CD8-positive, alpha-beta T cell (primary cell): ENCODE measurements at regions of chr3 and their contacts with region 1.

Region 1: GRCh38 chr3:49339945-49340800 is at the start of gene USP4:
- DNase-seq: peak; percentile 79 to 97 (median 90)
- ATAC-seq: peak; percentile 85
- H3K4me3 ChIP-seq: peak within 1 kb of the TSS; percentile 78 to 89
- H3K4me3 Mint-ChIP-seq: peak within 1 kb of the TSS; percentile 93
- H3K27ac ChIP-seq: peak within 1 kb of the TSS; percentile 98
- H3K27ac Mint-ChIP-seq: peak within 1 kb of the TSS; percentile 96
- H3K4me1 ChIP-seq: peaks cover 40% of the 10 kb centered on the region
- H3K4me1 Mint-ChIP-seq: peaks cover 48% of the 10 kb centered on the region
- H3K27me3 ChIP-seq: no peaks in the 10 kb centered on the region
- H3K27me3 Mint-ChIP-seq: no peaks in the 10 kb centered on the region
- CTCF ChIP-seq: peak; percentile 36
- total RNA-seq, gene USP4: 78.0 to 92.4 TPM

Region 2: DNA sequence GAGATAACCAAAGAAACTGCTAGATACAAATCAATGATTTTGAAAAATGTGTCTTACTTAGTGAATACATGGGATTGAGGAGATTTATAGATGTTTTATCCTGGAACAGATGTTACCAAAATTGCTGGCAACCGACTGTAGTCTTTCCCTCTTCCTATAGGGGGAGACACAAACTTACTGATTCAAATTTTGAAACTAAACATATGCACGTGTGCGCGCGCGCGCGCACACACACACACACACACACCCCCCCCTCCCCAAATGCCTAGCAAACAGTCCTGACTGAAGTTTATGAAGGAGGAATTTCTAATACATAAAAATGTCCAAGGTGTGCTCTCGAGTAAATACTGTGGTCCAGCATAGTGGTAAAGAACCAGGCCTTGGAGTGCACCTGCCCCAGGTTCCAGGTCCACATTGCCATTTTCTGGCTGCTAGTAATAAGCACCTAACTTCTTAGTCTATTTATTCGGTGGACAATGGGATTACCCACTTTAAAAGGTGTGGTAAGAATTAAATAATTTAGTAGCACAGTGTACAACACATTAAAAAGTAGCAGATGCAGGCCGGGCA is 44.6 kb before region 1 on chr3:
- CTCF ChIA-PET with region 1: interaction called, 4 read pairs
- POLR2A ChIA-PET with region 1: interaction called, 3 read pairs
- intact Hi-C with region 1: loop called in 1 of 2 experiments (anchors 10 kb)
- DNase-seq: peak in 5 of 9 experiments; percentile 22 to 65 (median 46)
- ATAC-seq: peak; percentile 77
- H3K4me3 ChIP-seq: no peak overlapping the region
- H3K4me3 Mint-ChIP-seq: no peak overlapping the region
- H3K27ac ChIP-seq: no peak overlapping the region
- H3K27ac Mint-ChIP-seq: peak overlapping the region; percentile 37
- H3K4me1 ChIP-seq: no peaks in the 10 kb centered on the region
- H3K4me1 Mint-ChIP-seq: peaks cover 5% of the 10 kb centered on the region
- H3K27me3 ChIP-seq: no peaks in the 10 kb centered on the region
- H3K27me3 Mint-ChIP-seq: no peaks in the 10 kb centered on the region
- CTCF ChIP-seq: peak; percentile 78

Region 3: DNA sequence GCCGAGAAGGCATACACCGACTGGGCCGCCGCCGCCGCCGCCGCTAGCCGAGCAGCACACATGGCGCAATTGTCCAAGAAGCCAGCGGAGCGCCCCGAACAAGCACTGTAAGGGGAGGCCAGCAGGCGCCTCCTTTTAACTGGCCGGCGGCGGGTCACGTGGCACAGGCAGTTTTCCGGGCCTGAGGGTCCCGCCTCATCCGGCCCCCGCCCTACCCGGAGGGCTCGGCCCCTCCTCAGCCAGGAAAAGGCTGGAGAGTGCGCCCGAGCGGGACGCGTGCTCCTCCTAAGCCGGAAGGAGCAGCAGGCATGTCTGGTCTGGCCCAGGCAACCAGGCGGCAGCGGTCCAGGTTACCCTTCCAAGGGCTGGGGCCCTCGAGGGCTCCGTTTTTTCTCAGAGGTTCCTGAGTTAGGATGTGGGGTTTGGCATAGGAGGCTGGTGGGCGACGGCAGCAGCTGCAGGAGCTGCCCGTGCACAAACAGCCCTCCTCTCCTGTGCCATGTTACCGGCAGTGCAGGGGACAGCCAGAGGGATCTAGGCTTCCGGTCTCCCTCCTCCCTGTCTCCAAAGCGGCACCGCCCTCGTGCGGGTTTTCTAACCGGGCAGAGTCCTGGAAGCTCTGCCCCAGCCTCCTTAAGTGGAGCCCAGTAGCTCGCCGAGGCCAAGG is 18.2 kb after region 1 on chr3 and contains the start of gene GPX1:
- CTCF ChIA-PET with region 1: interaction called, 12 read pairs
- POLR2A ChIA-PET with region 1: interaction called, 55 read pairs
- intact Hi-C with region 1: loop called (anchors 1 kb)
- DNase-seq: peak; percentile 45 to 89 (median 78)
- ATAC-seq: peak; percentile 57
- H3K4me3 ChIP-seq: peak within 1 kb of the TSS; percentile 61 to 73
- H3K4me3 Mint-ChIP-seq: peak within 1 kb of the TSS; percentile 91
- H3K27ac ChIP-seq: peak within 1 kb of the TSS; percentile 62 to 81
- H3K27ac Mint-ChIP-seq: peak within 1 kb of the TSS; percentile 96
- H3K4me1 ChIP-seq: peaks cover 26% of the 10 kb centered on the region
- H3K4me1 Mint-ChIP-seq: peaks cover 41% of the 10 kb centered on the region
- H3K27me3 ChIP-seq: no peaks in the 10 kb centered on the region
- H3K27me3 Mint-ChIP-seq: no peaks in the 10 kb centered on the region
- CTCF ChIP-seq: no peak
- total RNA-seq, gene GPX1: 24.4 to 27.8 TPM

Region 4: DNA sequence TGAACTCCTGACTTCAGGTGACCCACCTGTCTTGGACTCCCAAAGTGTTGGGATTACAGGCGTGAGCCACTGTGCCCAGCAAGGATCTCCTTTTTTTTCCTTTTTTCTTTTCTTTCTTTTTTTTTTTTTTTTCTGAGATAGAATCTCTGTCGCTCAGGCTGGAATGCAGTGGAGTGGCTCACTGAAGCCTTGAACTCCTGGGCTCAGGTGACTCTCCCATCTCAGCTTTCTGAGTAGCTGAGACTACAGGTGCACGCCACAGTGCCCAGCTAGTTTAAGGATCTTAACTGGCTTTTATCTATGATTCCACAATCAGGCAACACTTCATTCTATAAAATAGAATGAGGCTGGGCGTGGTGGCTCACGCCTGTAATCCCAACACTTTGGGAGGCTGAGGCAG is 105.2 kb after region 1 on chr3:
- CTCF ChIA-PET with region 1: interaction called, 40 read pairs
- POLR2A ChIA-PET with region 1: interaction called, 21 read pairs
- intact Hi-C with region 1: loop called (anchors 1 kb)
- DNase-seq: no peak
- ATAC-seq: no peak
- H3K4me3 ChIP-seq: no peak overlapping the region
- H3K4me3 Mint-ChIP-seq: no peak overlapping the region
- H3K27ac ChIP-seq: no peak overlapping the region
- H3K27ac Mint-ChIP-seq: no peak overlapping the region
- H3K4me1 ChIP-seq: peaks cover 13% of the 10 kb centered on the region
- H3K4me1 Mint-ChIP-seq: peaks cover 11% of the 10 kb centered on the region
- H3K27me3 ChIP-seq: no peaks in the 10 kb centered on the region
- H3K27me3 Mint-ChIP-seq: no peaks in the 10 kb centered on the region
- CTCF ChIP-seq: no peak

Region 5: DNA sequence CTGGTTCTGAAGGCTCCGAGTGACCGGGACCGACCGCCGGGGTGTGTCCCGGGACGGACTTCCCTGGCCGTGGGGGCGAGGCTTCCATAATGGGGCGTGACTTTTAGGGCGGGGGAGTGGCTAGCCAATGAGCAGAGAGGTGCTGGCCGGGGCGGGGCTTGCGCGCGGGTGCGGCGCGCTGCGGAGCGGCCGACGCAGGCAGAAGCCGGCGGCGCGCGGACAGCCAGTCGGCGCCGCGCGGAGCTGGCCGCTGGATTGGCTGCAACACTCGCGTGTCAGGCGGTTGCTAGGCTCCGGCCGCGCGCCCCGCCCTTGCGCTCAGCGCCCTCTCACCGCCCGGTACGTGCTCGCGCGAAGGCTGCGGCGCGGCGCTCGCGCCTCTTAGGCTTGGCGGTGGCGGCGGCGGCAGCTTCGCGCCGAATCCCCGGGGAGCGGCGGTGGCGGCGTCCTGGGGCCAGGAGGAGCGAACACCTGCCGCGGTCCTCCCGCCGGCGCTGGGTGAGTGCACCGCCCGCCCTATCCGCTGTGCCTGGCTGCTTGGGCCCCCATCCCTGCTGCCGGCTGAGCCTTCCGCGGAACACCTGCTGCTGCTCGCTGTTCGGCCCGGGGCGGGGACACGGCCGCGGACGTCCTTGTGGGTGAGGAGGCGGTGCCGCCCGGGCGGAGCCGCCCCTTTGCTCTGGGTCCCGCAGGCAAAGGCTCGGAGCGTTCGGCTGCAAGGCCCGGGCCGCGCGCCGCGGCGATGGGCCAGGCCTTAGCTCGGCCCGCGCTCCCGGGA is 130.0 kb after region 1 on chr3 and contains the start of gene DAG1:
- CTCF ChIA-PET with region 1: interaction called, 7 read pairs
- POLR2A ChIA-PET with region 1: interaction called, 19 read pairs
- intact Hi-C with region 1: loop called (anchors 1 kb)
- DNase-seq: peak; percentile 89 to 99 (median 95)
- ATAC-seq: peak; percentile 85
- H3K4me3 ChIP-seq: peak within 1 kb of the TSS; percentile 83 to 97
- H3K4me3 Mint-ChIP-seq: peak within 1 kb of the TSS; percentile 88
- H3K27ac ChIP-seq: peak within 1 kb of the TSS; percentile 86 to 87
- H3K27ac Mint-ChIP-seq: peak within 1 kb of the TSS; percentile 94
- H3K4me1 ChIP-seq: peaks cover 21% of the 10 kb centered on the region
- H3K4me1 Mint-ChIP-seq: peaks cover 24% of the 10 kb centered on the region
- H3K27me3 ChIP-seq: no peaks in the 10 kb centered on the region
- H3K27me3 Mint-ChIP-seq: no peaks in the 10 kb centered on the region
- CTCF ChIP-seq: no peak
- total RNA-seq, gene DAG1: 17.0 to 19.9 TPM

Region 6: DNA sequence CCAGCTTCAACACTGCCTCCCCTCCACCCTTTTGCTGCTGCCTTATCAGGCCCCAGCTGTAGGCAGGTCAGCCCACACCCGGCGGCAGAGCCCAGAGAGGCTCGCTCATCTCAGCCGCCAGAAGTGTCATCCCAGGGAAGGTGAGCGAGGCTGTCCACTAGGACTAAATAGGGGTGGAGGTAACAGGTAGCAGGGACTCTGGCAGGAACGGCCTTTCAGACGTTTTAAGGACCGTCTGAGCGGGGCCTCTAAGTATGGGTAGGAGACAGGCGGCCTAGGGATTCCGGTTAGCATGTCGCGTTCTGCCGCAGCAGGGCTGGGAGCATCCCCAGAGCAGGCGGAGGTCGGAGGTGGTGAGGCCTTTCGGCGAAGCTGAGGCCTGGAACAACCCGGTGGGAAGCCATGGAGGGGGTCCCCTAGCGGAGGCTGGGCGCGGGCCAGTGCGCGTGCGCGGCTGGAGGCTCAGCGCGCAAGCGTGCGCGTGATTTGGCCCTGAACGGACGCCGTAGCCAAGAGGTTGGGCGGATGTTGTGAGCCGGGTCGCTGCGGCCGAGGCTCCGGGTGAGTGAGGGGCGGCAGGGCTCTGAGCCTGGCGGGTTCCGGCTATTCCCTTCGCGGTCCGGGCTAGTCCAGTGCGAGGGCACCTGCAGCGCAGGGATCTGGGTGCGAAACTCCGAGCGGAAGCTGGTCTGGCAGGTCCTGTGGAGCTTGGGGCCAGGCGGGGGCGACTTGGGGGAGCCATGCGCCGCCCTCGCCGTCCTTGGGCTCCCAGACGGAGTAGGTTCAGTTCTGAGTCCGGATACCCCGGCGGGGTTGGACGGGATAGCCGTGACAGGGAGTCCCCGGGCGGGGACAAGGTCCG is 349.1 kb after region 1 on chr3 and contains the starts of genes MST1 and RNF123:
- CTCF ChIA-PET with region 1: no interaction called
- POLR2A ChIA-PET with region 1: no interaction called
- intact Hi-C with region 1: no loop called
- DNase-seq: peak; percentile 81 to 97 (median 92)
- ATAC-seq: peak; percentile 84
- H3K4me3 ChIP-seq: peak within 1 kb of the TSS; percentile 96 to 99
- H3K4me3 Mint-ChIP-seq: peak within 1 kb of the TSS; percentile 95
- H3K27ac ChIP-seq: peak within 1 kb of the TSS; percentile 73 to 78
- H3K27ac Mint-ChIP-seq: peak within 1 kb of the TSS; percentile 95
- H3K4me1 ChIP-seq: peaks cover 22% of the 10 kb centered on the region
- H3K4me1 Mint-ChIP-seq: peaks cover 45% of the 10 kb centered on the region
- H3K27me3 ChIP-seq: peaks cover 0 to 8% of the 10 kb centered on the region in 2 experiments
- H3K27me3 Mint-ChIP-seq: no peaks in the 10 kb centered on the region
- CTCF ChIP-seq: no peak
- total RNA-seq, gene MST1: 8.6 to 9.1 TPM
- total RNA-seq, gene RNF123: 23.7 to 27.0 TPM